ENCODE measurements at regions of chr10 and their contacts with region 1.

Region 1: DNA sequence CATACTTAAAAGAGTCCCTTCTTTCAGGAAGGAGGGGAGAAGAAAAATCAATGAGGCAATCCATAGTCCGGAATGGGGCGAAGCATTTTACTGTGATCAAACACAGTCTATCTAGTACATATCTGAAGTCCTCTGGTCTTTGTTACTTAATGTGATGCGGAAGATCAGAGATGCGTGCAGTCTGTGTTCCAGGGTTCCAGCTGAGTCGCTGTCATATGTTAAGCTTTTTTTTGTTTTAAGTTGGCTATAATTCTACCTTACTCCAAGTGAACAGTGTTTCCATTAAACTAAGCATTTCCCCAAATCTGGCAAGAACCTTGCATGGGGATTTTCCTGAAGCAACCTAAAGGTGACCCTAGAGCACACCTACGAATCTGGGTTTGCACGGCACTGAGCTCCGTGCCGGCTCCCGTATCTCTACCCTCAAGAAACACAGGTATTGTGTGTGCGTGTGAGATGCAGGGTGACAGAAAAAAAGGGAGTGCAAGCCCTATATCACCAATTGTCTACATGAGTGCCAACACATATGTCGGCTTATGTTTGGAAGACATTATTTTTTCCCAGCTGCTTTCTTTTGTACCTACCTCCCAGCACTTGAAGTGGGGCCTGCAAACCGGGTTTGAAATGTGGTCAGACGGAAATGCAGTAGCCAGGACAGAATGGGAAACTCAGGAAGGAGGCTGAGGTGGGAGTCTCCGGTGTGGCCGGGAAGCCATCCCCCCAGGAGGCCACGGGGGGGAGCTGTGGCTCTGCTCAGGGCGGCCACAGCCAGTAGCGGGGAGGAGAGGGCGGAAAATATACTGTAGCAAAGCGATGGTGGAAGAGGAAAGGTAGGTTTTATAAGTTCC is 435.8 kb upstream of the MGMT start:
- DNase-seq: peak; percentile 65
- ATAC-seq: peak; percentile 93

Region 2: GRCh38 chr10:129332476-129332875 is 301.3 kb after region 1 on chr10:
- intact Hi-C with region 1: loop called (anchors 5 kb)
- DNase-seq: no peak
- ATAC-seq: no peak

Region 3: GRCh38 chr10:129971381-129972144 is 940.3 kb after region 1 on chr10:
- intact Hi-C with region 1: loop called (anchors 5 kb)
- DNase-seq: peak; percentile 78
- ATAC-seq: peak; percentile 94

Measured in Right ventricle myocardium superior (tissue), 1 donor.